ENCODE measurements at regions of chr4 and their contacts with region 1.

Region 1: GRCh38 chr4:149980941-149981340 is 97.3 kb upstream of the DCLK2 start:
- DNase-seq: peak; percentile 35 to 50
- H3K4me3 ChIP-seq: no peak overlapping the region
- H3K4me3 Mint-ChIP-seq: no peak overlapping the region
- H3K27ac Mint-ChIP-seq: no peak overlapping the region
- H3K4me1 ChIP-seq: no peaks in the 10 kb centered on the region
- H3K4me1 Mint-ChIP-seq: no peaks in the 10 kb centered on the region
- H3K27me3 ChIP-seq: no peaks in the 10 kb centered on the region
- H3K27me3 Mint-ChIP-seq: peaks cover 7% of the 10 kb centered on the region
- CTCF ChIP-seq: peak; percentile 68

Region 2: GRCh38 chr4:150235808-150236271 is 254.9 kb after region 1 on chr4:
- CTCF ChIA-PET with region 1: no interaction called
- POLR2A ChIA-PET with region 1: no interaction called
- intact Hi-C with region 1: loop called (anchors 2 kb)
- DNase-seq: no peak
- H3K4me3 ChIP-seq: no peak overlapping the region
- H3K4me3 Mint-ChIP-seq: no peak overlapping the region
- H3K27ac Mint-ChIP-seq: no peak overlapping the region
- H3K4me1 ChIP-seq: no peaks in the 10 kb centered on the region
- H3K4me1 Mint-ChIP-seq: peaks cover 7% of the 10 kb centered on the region
- H3K27me3 ChIP-seq: no peaks in the 10 kb centered on the region
- H3K27me3 Mint-ChIP-seq: no peaks in the 10 kb centered on the region
- CTCF ChIP-seq: no peak